Endothelial cell of umbilical vein (primary cell): ENCODE measurements at regions of chr22 and their contacts with region 1.

Region 1: GRCh38 chr22:39808081-39808480 is 85.5 kb downstream of the ENTHD1 start:
- DNase-seq: peak; percentile 28
- H3K4me3 ChIP-seq: no peak overlapping the region
- H3K27ac ChIP-seq: no peak overlapping the region
- H3K4me1 ChIP-seq: no peaks in the 10 kb centered on the region
- H3K27me3 ChIP-seq: peaks cover 14 to 16% of the 10 kb centered on the region in 2 experiments
- CTCF ChIP-seq: peak; percentile 61 to 64
- POLR2A ChIP-seq: no peak

Region 2: DNA sequence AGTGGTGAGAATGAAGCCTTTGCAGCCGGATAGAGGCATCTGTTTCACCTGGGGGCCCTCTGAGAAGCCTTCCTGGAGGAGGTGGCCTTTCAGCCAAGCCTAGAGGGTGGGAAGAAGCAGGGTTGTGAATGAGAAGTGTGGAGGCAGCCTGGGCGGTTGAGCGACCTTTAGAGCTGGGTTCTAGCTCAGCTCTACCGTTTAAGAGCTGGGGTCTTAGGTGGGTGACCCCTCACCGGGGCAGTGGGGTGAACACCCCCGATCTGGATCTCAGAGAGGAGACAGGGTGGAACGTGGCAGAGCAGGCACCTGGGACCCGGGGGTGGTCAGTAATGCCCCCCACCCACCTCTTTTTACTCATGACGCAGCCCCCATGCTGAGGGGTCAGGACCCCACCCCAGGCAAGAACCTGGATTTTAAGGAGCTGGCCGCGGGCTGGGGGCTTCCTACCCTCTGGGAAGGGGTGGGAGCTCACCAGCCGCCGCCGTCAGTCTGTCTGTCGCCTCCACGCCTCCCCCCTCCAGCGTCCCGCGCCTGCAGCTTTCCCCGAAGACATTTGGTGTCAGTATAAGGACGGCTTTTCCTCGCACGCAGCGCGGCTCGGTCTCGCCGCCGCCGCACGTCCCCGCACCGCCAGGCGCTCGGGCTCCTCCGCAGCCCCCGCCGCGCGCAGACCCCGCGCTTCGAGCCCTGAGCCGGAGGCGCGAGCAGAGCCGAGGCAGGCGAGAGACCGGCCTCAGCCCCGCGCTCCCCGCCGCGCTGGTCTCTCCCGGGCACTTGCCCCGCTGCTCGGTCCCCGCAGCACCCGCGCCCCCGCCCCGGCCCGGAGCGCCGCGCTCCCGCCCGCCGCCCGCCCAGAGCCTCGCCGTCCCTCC is 250.9 kb before region 1 on chr22:
- CTCF ChIA-PET with region 1: interaction called, 17 read pairs
- POLR2A ChIA-PET with region 1: no interaction called
- dilution Hi-C with region 1: no loop called
- intact Hi-C with region 1: no loop called
- DNase-seq: no peak
- H3K4me3 ChIP-seq: no peak overlapping the region
- H3K27ac ChIP-seq: no peak overlapping the region
- H3K4me1 ChIP-seq: no peaks in the 10 kb centered on the region
- H3K27me3 ChIP-seq: peaks cover 31 to 33% of the 10 kb centered on the region in 2 experiments
- CTCF ChIP-seq: no peak
- POLR2A ChIP-seq: no peak